ENCODE measurements at regions of chr16 and their contacts with region 1.

Region 1: DNA sequence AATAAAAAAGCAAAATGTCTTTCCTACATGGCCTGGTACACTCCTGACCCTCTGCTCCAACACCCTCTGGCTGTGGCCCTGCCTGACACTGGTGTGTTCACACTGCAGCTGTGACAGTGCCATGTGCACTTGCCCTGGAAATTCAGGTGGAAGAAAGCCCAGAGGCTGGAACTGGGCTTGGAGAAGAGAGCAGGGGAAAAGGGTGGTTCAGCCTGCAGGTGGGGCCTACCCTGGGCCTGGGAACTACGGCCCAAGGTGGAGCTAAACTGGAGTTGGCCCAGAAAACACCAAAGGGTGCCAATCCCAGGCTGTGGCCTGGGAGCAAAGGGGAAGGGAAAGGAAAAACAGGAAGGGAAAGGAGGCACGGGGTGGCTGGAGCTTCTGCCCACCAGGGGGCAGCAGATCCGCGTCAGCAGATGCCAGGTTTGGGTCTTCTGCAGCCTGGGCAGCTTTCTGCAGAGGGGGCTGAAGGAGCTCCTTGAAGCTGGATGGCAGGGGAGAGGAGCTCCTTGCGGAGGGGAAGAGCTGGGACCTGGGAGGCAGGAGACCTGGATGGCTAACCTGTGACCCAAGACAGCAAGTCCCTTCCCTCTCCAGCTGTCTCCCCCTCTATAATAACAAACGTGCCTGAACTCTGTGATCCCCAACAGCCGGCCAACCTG is 15.4 kb upstream of the CTCF start:
- DNase-seq: no peak
- H3K4me3 ChIP-seq: no peak overlapping the region
- H3K27me3 ChIP-seq: no peaks in the 10 kb centered on the region
- CTCF ChIP-seq: peak; percentile 95

Region 2: DNA sequence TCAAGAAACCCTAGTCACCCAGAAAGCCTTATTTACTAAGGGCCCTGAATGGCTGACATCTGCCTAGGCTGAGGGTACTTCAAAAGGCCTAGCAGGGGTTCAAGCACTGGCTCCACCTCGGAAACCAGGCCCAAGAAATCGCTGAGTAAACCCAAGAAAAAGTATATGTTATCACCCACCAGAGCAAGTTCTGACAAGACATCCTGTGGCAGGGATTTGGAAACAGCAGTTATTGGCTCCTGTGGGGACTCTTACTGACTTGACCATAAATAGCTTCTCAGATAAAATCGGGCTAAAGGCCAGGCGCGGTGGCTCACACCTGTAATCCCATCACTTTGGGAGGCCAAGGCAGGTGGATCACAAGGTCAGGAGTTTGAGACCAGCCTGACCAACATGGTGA is 78.2 kb before region 1 on chr16:
- CTCF ChIA-PET with region 1: no interaction called
- POLR2A ChIA-PET with region 1: no interaction called
- DNase-seq: no peak
- H3K4me3 ChIP-seq: no peak overlapping the region
- H3K27me3 ChIP-seq: no peaks in the 10 kb centered on the region
- CTCF ChIP-seq: no peak

Region 3: GRCh38 chr16:67530013-67530939 is 16.6 kb before region 1 on chr16:
- CTCF ChIA-PET with region 1: interaction called, 35 read pairs
- POLR2A ChIA-PET with region 1: no interaction called
- DNase-seq: peak; percentile 23
- H3K4me3 ChIP-seq: peak overlapping the region; percentile 77
- H3K27me3 ChIP-seq: no peaks in the 10 kb centered on the region
- CTCF ChIP-seq: no peak

Region 4: DNA sequence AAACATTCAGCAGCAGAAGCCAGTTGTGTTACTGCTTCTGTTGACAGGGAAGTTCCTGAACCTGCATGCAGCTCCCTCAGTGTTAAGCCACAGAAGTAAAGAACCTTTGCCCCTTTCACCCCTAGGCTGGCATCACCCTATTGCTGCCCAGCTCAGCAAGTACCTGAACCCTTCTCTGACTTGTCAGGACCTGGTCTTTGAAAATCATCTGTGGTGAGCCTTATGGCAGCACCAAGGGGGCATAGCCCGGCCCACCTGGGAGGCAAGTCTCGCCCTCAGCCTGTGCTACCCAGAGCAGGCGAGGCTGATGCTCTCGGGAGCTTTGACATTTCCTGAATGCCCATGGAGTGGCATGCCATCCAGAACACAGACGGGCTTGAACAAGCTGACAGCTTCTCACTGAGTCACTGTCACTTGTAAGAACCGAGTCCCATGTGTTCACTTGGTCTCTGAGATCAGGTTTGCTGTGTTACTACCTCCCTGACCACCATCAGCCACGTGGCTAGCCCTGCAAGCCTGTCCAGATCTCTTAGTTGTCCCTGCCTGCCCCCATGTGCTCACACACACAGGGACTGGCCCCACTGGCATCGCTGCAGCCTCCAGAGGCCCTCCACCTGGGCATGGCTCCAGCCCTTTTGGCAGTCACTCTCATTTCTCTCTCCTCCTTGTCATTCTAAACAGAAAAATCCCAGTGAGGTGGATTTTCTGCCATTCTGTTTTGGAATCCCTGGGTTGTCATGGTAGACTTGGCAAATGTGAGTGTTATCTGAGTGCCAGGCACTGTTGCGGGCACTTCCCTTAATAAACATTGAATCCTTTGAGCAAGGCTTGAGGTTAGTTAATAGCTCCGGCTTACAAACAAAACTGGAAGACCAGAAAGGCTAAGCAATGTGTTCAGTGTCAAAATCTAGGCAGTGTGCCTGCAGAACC is 95.2 kb after region 1 on chr16:
- CTCF ChIA-PET with region 1: interaction called, 90 read pairs
- POLR2A ChIA-PET with region 1: no interaction called
- DNase-seq: no peak
- H3K4me3 ChIP-seq: no peak overlapping the region
- H3K27me3 ChIP-seq: peaks cover 12% of the 10 kb centered on the region
- CTCF ChIP-seq: no peak

Region 5: DNA sequence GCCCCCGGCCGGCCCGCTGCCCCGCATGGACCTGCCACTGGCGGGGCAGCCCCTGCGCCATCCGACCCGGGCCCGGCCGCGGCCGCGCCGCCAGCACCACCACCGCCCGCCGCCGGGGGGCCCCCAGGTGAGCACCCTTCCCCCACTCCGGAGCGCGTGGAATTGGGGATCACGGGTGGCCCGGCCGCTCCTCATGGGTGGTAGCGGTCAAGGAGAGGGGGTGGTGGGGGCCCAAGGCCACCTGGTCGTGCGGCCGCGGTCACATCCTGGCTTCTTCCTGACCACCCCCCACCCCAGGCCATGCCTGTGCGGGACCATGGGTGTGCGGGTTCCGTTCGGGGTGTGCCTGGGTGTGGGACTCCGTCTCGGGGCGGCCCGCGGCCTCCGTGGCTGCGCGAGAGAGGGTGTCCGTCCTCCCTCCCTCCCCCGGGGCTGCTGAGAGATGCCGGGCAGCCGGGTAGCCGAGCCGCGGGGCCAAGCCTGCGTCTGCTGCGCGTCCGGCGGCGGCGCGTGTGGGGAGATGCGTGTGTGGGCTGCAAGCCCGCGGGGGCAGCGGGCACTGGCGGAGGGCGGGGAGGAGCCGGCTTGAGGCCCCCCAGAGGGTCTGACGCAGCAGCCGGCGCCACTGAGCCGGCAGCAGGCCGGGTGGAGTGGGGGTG is 106.4 kb after region 1 on chr16:
- CTCF ChIA-PET with region 1: interaction called, 17 read pairs
- POLR2A ChIA-PET with region 1: no interaction called
- DNase-seq: no peak
- H3K4me3 ChIP-seq: peak overlapping the region; percentile 44
- H3K27me3 ChIP-seq: peaks cover 26% of the 10 kb centered on the region
- CTCF ChIP-seq: peak; percentile 23; the same call in 1 of the 2 replicates